Heart right ventricle (tissue), 16 donors: ENCODE measurements at regions of chr4 and their contacts with region 1.

Region 1: DNA sequence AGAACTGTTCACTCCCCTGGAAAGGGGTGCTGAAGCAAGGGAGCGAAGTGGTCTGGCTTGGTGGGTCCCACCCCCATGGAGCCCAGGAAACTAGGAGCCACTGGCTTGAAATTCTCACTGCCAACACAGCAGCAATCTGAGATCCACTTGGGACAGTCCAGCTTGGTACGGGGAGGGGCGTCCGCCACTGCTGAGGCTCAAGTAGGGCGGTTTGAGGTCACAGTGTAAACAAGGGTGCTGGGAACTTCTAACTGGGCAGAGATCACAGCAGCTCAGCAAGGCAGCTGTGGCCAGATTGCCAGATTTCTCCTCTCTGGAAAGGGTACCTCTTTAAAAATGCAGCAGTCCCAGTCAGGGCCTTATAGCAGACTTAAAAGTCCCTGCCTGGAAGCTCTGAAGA is 53.9 kb upstream of the GALNTL6 start:
- DNase-seq: no peak
- ATAC-seq: no peak
- H3K4me3 ChIP-seq: no peak overlapping the region
- H3K27ac ChIP-seq: no peak overlapping the region
- H3K4me1 ChIP-seq: no peaks in the 10 kb centered on the region
- H3K27me3 ChIP-seq: no peaks in the 10 kb centered on the region
- CTCF ChIP-seq: no peak

Region 2: DNA sequence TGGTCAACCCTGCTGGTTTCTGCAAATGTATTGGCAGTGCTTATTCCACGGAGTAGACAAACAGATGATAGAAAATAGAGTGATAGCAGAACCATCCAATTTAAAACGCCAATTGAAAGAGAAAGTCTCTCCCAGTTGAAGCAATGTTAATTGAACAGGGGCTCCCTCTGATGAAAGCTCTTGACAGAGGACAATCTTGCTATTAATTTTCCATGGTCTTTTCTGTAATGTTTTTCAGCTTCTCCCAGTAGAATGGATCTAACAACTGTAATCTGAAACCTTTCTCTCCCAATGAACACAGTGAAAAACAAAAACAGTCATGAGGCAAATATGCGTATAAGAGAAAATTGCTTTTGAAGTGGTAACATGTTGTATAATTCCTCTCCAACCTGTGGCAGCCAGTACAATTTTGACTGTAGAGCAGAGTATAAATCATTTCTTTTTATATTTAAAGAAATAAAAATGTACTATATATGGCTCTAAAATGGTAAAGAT is 171.2 kb before region 1 on chr4:
- intact Hi-C with region 1: no loop called
- DNase-seq: no peak
- ATAC-seq: no peak
- H3K4me3 ChIP-seq: no peak overlapping the region
- H3K27ac ChIP-seq: no peak overlapping the region
- H3K4me1 ChIP-seq: no peaks in the 10 kb centered on the region
- H3K27me3 ChIP-seq: no peaks in the 10 kb centered on the region
- CTCF ChIP-seq: no peak

Region 3: DNA sequence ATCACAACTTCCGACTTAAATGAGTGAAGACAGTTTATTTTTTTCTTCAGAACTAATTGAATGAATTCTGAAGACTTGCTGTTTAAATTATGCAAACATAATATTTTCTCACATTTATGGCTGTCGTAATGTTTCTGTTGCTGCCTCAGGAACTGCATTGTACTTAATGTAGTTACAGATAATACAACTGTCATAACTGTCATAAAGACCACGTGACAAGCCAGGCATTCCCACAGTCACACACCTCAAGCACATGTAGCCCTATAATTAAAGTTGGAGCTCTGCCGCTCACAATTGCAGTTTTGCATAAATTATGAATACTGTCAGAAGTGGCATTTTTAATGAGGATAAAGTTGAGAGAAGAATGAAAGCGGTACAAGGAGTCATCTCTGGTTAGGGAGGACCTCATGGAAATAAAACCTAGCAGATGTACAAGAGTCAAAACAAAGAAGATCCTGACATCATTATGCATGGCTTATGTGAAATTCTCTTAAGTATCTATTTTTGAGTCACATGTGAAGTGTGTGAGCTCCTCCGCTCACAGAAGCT is 15.4 kb after region 1 on chr4:
- intact Hi-C with region 1: loop called in 1 of 10 experiments (anchors 1 kb)
- DNase-seq: no peak
- ATAC-seq: no peak
- H3K4me3 ChIP-seq: no peak overlapping the region
- H3K27ac ChIP-seq: no peak overlapping the region
- H3K4me1 ChIP-seq: no peaks in the 10 kb centered on the region
- H3K27me3 ChIP-seq: no peaks in the 10 kb centered on the region
- CTCF ChIP-seq: no peak

Region 4: GRCh38 chr4:171812838-171813525 is 53.7 kb after region 1 on chr4 and contains the start of gene GALNTL6:
- intact Hi-C with region 1: no loop called
- DNase-seq: peak in 1 of 2 donors; percentile 9
- ATAC-seq: peak in 6 of 8 donors; percentile 8 to 71 (median 55)
- H3K4me3 ChIP-seq: peak within 1 kb of the TSS in 8 of 10 donors; percentile 28 to 44 (median 42)
- H3K27ac ChIP-seq: no peak within 1 kb of the TSS
- H3K4me1 ChIP-seq: peaks cover 0 to 15% (median 4%) of the 10 kb centered on the region in 9 donors
- H3K27me3 ChIP-seq: peaks cover 0 to 46% (median 38%) of the 10 kb centered on the region in 7 donors
- CTCF ChIP-seq: no peak
- total RNA-seq, gene GALNTL6: 0.14 to 2.6 (median 0.64) TPM in 5 of 10 donors, not detected in the others

Region 5: GRCh38 chr4:172169871-172170270 is 410.6 kb after region 1 on chr4:
- intact Hi-C with region 1: no loop called
- DNase-seq: no peak
- ATAC-seq: no peak
- H3K4me3 ChIP-seq: no peak overlapping the region
- H3K27ac ChIP-seq: no peak overlapping the region
- H3K4me1 ChIP-seq: no peaks in the 10 kb centered on the region
- H3K27me3 ChIP-seq: no peaks in the 10 kb centered on the region
- CTCF ChIP-seq: no peak